H1 (cell line): ENCODE measurements at regions of chr9 and their contacts with region 1.

Region 1: DNA sequence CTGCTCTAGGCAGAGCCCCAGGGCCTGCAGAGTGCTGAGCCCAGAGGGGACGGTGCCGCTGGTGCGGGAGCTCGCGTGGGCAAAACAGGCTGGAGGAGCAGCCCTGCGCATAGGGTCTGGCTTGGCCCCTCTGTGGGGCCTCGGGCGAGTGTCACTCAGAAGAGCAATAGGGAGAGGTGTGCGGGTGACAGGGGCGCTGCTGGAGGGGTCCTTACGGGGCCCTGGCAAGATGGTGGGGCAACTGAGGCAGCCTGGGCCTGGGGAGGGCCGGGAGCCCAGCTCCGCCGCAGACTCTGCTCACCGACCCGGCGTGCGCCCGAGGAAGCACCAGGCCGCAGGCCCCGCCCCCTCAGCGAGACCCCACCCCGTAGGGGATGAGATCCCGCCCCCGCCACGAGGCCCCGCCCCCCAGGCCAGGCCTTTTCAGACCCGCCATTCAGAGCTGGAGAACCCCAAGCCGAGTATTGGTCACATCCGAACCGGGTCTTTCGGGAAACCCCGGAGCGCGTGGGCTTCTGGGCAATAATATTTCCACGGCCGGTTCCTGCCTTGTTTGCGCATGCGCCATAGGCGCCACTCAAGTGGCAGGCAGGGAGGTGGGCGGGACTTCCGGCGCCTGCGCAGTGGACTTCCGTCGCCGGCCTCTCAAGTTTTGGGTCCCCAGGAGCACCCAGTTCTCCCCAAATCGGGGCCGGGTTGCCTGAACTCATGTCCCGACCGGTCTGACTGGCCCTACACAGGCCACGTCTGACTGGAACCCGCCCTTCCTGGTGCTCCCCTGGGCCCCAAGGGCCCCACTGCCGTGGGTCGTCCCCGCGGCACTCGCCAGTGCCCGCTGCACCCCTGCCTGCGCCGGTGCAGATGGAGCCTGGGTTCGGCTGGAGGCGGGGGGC is 1.3 kb upstream of the RNF208 start:
- DNase-seq: peak; percentile 96 to 99
- H3K4me3 ChIP-seq: peak overlapping the region; percentile 67 to 92 (median 79)
- H3K27ac ChIP-seq: no peak overlapping the region
- H3K4me1 ChIP-seq: peaks cover 0 to 20% (median 10%) of the 10 kb centered on the region in 4 experiments; a peak in 5 of 7 replicates
- H3K27me3 ChIP-seq: no peaks in the 10 kb centered on the region; a peak in 2 of 7 replicates
- CTCF ChIP-seq: no peak
- EP300 ChIP-seq: no peak
- POLR2A ChIP-seq: peak in 1 of 2 experiments; percentile 53; a peak in 1 of 3 replicates
- RAD21 ChIP-seq: no peak

Region 2: GRCh38 chr9:137123468-137123837 is 99.9 kb before region 1 on chr9:
- CTCF ChIA-PET with region 1: interaction called, 11 read pairs
- POLR2A ChIA-PET with region 1: no interaction called
- DNase-seq: no peak
- H3K4me3 ChIP-seq: no peak overlapping the region
- H3K27ac ChIP-seq: no peak overlapping the region
- H3K4me1 ChIP-seq: peaks cover 0 to 3% (median 3%) of the 10 kb centered on the region in 4 experiments; a peak in 4 of 7 replicates
- H3K27me3 ChIP-seq: 0 out of 7 replicates have a peak, but pooled peaks cover 0 to under 1% (median 0%) of the 10 kb centered on the region in 4 experiments
- CTCF ChIP-seq: no peak
- EP300 ChIP-seq: no peak
- POLR2A ChIP-seq: no peak
- RAD21 ChIP-seq: no peak